A549 (cell line): ENCODE measurements at regions of chr21 and their contacts with region 1.

Region 1: GRCh38 chr21:45820171-45821091 is 161.1 kb upstream of the COL6A1 start:
- DNase-seq: peak; percentile 78 to 82
- ATAC-seq: peak; percentile 82 to 93
- H3K4me3 ChIP-seq: no peak overlapping the region
- H3K27ac ChIP-seq: peak overlapping the region in 1 of 2 experiments; percentile 70; a peak in 3 of 6 replicates
- H3K4me1 ChIP-seq: peaks cover 28% of the 10 kb centered on the region
- CTCF ChIP-seq: peak; percentile 69
- EP300 ChIP-seq: no peak
- POLR2A ChIP-seq: no peak
- RAD21 ChIP-seq: peak; percentile 87 to 90

Region 2: DNA sequence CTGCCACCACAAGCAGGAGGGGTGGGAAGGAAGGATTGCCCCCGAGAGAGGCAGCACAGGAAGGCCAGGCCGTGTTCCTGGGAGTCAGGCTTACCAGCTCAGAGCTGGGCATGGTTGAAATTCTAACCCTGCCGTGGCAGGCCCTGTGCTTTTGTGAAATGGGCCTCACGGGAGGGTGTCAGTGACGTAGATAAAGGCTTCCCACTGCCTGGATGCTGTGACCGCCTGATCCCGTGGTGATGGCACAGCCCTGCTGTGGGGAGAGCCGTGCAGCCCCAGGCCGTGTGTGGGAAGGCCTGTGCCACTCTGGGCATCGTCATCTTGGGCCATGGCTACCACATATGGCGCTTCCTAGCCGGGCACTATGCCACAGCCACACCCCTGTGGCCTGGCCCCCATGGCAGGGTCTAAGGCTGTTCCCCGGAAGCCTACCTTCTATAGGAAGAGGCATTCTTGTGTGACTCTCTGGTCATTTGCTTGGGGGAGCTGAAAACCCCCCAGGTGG is 15.6 kb before region 1 on chr21:
- CTCF ChIA-PET with region 1: interaction called, 12 read pairs
- POLR2A ChIA-PET with region 1: no interaction called
- DNase-seq: no peak
- ATAC-seq: no peak
- H3K4me3 ChIP-seq: no peak overlapping the region
- H3K27ac ChIP-seq: no peak overlapping the region
- H3K4me1 ChIP-seq: no peaks in the 10 kb centered on the region
- CTCF ChIP-seq: no peak
- EP300 ChIP-seq: no peak
- POLR2A ChIP-seq: no peak
- RAD21 ChIP-seq: no peak

Region 3: DNA sequence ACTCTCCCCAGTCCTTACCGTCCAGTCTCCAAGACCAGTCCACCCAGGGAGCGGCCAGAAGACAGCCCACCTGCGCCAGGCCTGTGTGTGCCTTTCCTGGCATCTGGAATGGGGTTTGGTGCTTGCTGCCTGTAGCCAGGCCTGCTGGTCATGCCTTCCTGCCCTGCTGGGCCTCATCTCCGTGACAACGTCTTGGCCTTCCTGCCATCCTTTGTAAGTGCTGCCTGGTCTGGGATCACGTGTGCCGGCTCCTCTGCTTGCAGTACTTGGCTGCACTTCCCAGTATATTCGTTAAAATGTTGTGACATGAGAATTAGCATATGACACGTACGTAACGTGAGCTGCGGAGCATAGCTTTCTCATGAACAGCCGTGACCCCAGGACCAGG is 15.8 kb after region 1 on chr21:
- CTCF ChIA-PET with region 1: interaction called, 16 read pairs
- POLR2A ChIA-PET with region 1: no interaction called
- DNase-seq: no peak
- ATAC-seq: no peak
- H3K4me3 ChIP-seq: no peak overlapping the region
- H3K27ac ChIP-seq: no peak overlapping the region
- H3K4me1 ChIP-seq: no peaks in the 10 kb centered on the region
- CTCF ChIP-seq: no peak
- EP300 ChIP-seq: no peak
- POLR2A ChIP-seq: no peak
- RAD21 ChIP-seq: no peak

Region 4: GRCh38 chr21:46002841-46003574 is 182.6 kb after region 1 on chr21:
- CTCF ChIA-PET with region 1: no interaction called
- POLR2A ChIA-PET with region 1: no interaction called
- DNase-seq: no peak
- ATAC-seq: no peak
- H3K4me3 ChIP-seq: no peak overlapping the region
- H3K27ac ChIP-seq: no peak overlapping the region
- H3K4me1 ChIP-seq: no peaks in the 10 kb centered on the region
- CTCF ChIP-seq: no peak
- EP300 ChIP-seq: no peak
- POLR2A ChIP-seq: no peak
- RAD21 ChIP-seq: no peak